ENCODE measurements at regions of chr1 and their contacts with region 1.

Region 1: GRCh38 chr1:3186513-3186921 is 117.5 kb downstream of the PRDM16 start:
- DNase-seq: peak; percentile 93 to 98
- H3K4me3 ChIP-seq: peak overlapping the region in 1 of 2 donors; percentile 41
- H3K27ac ChIP-seq: peak overlapping the region; percentile 99
- H3K4me1 ChIP-seq: peaks cover 24 to 72% of the 10 kb centered on the region in 2 donors
- H3K27me3 ChIP-seq: no peaks in the 10 kb centered on the region
- CTCF ChIP-seq: no peak

Region 2: DNA sequence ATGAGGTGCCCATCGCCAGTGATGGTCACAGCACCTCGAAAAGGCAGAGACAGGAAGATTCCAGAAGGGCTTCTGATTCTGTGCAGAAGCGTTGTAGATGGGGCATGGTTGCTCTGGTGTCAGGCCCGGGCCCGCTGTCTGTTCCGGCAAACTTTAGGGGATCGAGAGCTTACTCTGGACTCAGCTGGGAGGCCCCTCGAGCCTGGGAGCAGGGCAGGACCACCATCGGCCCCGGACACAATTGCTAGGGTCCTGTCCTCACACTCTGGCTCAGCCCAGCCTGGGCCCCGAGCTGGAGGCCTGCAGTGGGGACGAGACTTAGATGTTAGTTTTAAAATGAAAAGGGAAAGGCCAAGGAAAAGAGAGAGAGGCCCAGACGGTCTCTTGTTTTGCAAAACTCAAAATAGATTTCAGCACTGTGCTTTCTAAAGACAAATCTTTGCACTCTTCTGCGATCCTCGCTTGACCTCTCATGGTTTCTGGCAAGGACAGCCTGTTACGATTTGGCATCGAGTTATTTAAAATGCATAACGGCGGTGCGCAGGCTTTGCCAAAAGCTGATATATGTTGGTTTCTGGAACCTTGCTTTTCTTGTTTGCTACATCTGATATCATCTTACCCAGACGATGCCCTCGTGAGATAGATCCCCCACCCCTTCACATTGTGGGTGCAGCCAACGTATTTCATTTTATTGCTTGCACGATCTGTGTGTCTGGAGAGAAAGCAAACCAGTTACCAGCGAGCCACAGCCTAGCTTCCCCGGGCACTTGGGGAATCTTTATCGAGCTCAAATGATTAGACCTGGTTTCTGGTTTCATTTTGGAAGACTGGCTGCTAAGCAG is 59.5 kb before region 1 on chr1:
- intact Hi-C with region 1: loop called (anchors 2 kb)
- DNase-seq: no peak
- H3K4me3 ChIP-seq: peak overlapping the region; percentile 30 to 32
- H3K27ac ChIP-seq: peak overlapping the region; percentile 86 to 91
- H3K4me1 ChIP-seq: peaks cover 49 to 96% of the 10 kb centered on the region in 2 donors
- H3K27me3 ChIP-seq: no peaks in the 10 kb centered on the region
- CTCF ChIP-seq: no peak

Region 3: DNA sequence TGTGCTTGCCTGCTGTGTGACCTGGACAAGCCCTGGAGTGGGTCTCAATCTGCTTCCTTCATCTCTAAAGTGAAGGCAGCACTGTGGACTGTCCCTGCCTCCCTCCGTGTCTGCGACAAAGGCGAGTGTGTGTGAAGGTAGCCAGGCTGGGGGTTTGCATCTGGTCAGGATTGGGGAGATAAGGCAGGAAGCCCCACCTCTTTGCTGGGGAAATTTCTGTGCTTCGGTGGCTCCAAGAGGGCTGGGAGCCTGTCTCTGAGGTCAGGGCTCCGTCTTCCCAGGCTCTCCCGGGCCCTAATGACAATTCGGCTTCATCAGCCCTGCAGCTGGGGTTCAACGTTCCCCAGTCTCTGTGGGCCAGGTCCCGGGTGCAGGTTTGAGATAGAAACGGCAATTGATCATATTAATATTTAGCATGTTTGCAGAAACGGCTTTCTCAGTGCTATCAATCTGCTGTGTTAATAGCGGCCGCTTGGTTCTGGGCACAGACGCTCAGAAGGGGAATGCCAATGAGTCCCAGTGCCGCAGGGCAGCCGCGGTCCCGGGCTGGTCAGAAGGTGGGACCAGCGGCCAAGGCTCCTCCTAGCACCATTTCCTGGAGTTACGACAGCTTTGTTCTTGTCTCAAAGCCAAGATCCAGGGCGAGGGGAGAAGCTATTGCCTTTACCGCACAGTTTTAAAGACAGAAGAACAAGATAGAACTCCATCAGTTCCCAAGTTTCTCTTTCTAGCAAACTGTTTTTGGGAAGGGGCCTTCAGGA is 11.8 kb before region 1 on chr1:
- intact Hi-C with region 1: loop called (anchors 1 kb)
- DNase-seq: peak; percentile 59 to 94
- H3K4me3 ChIP-seq: peak overlapping the region in 1 of 2 donors; percentile 51
- H3K27ac ChIP-seq: peak overlapping the region; percentile 91 to 93
- H3K4me1 ChIP-seq: peaks cover 25 to 62% of the 10 kb centered on the region in 2 donors
- H3K27me3 ChIP-seq: no peaks in the 10 kb centered on the region
- CTCF ChIP-seq: no peak

Region 4: GRCh38 chr1:3369446-3370076 is 183.0 kb after region 1 on chr1:
- intact Hi-C with region 1: loop called (anchors 5 kb)
- DNase-seq: peak; percentile 79 to 96
- H3K4me3 ChIP-seq: peak overlapping the region in 1 of 2 donors; percentile 21
- H3K27ac ChIP-seq: peak overlapping the region; percentile 95 to 97
- H3K4me1 ChIP-seq: peaks cover 47 to 86% of the 10 kb centered on the region in 2 donors
- H3K27me3 ChIP-seq: no peaks in the 10 kb centered on the region
- CTCF ChIP-seq: no peak

Measured in ascending aorta (tissue), 2 donors.